ENCODE measurements at regions of chr11 and their contacts with region 1.

Region 1: GRCh38 chr11:131867457-131868257 is 497.2 kb downstream of the NTM start:
- DNase-seq: peak; percentile 76
- ATAC-seq: peak; percentile 80

Region 2: GRCh38 chr11:132126973-132127899 is 259.6 kb after region 1 on chr11:
- intact Hi-C with region 1: loop called (anchors 5 kb)
- DNase-seq: no peak
- ATAC-seq: peak; percentile 85

Region 3: DNA sequence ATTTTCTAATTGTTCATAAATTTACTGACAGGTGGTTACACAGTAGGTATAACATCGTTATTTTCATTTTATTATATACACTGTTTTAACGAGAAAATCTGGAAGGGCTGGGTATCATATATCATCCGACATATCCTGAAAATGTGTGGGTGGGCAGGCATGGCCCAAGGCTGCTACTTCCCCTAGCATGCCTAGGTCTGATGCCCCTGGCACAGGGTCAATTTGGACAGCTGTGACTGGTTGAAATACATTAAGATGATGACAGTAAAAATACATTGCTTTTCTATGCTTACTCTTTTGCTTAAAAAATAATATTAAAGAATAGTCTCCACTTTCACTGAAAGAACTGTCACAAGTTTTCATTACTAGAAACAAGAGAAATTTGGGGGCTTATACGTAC is 755.9 kb after region 1 on chr11:
- intact Hi-C with region 1: no loop called
- DNase-seq: no peak
- ATAC-seq: no peak

Measured in Right ventricle myocardium inferior (tissue), 1 donor.